Prostate gland (tissue), 2 donors: ENCODE measurements at regions of chr10 and their contacts with region 1.

Region 1: GRCh38 chr10:69506834-69507721 is 55.8 kb downstream of the TSPAN15 start:
- DNase-seq: no peak
- H3K4me3 ChIP-seq: no peak overlapping the region
- H3K27ac ChIP-seq: peak overlapping the region; percentile 30 to 44
- H3K4me1 ChIP-seq: no peaks in the 10 kb centered on the region
- H3K27me3 ChIP-seq: no peaks in the 10 kb centered on the region
- CTCF ChIP-seq: no peak
- POLR2A ChIP-seq: no peak

Region 2: GRCh38 chr10:68959695-68960524 is 547.2 kb before region 1 on chr10:
- intact Hi-C with region 1: no loop called
- DNase-seq: no peak
- H3K4me3 ChIP-seq: no peak overlapping the region
- H3K27ac ChIP-seq: no peak overlapping the region
- H3K4me1 ChIP-seq: no peaks in the 10 kb centered on the region
- H3K27me3 ChIP-seq: no peaks in the 10 kb centered on the region
- CTCF ChIP-seq: no peak
- POLR2A ChIP-seq: no peak

Region 3: DNA sequence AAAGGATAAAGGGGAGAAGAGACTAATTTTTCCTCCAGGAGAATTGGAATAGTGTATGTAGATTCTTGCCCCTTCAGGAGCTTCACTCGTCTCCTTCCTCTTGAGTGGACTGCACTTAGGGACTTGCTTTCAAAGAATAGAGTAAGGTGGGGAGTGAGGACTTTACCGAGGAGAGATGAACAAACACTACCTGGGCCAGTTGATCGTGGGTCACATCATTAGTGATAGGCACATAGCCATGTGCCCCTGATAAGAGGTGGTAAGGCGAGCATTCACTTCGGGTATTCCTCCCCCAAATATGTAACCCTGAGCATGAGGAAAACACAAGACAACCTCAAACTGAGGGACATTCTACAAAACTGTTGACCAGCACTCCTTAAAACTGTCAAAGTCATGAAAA is 533.1 kb before region 1 on chr10:
- intact Hi-C with region 1: no loop called
- DNase-seq: no peak
- H3K4me3 ChIP-seq: no peak overlapping the region
- H3K27ac ChIP-seq: no peak overlapping the region
- H3K4me1 ChIP-seq: no peaks in the 10 kb centered on the region
- H3K27me3 ChIP-seq: no peaks in the 10 kb centered on the region
- CTCF ChIP-seq: no peak
- POLR2A ChIP-seq: no peak

Region 4: GRCh38 chr10:69237528-69238159 is 269.4 kb before region 1 on chr10:
- intact Hi-C with region 1: loop called (anchors 5 kb)
- DNase-seq: peak; percentile 79
- H3K4me3 ChIP-seq: no peak overlapping the region
- H3K27ac ChIP-seq: no peak overlapping the region
- H3K4me1 ChIP-seq: no peaks in the 10 kb centered on the region
- H3K27me3 ChIP-seq: no peaks in the 10 kb centered on the region
- CTCF ChIP-seq: peak; percentile 76 to 97 (median 95)
- POLR2A ChIP-seq: no peak

Region 5: DNA sequence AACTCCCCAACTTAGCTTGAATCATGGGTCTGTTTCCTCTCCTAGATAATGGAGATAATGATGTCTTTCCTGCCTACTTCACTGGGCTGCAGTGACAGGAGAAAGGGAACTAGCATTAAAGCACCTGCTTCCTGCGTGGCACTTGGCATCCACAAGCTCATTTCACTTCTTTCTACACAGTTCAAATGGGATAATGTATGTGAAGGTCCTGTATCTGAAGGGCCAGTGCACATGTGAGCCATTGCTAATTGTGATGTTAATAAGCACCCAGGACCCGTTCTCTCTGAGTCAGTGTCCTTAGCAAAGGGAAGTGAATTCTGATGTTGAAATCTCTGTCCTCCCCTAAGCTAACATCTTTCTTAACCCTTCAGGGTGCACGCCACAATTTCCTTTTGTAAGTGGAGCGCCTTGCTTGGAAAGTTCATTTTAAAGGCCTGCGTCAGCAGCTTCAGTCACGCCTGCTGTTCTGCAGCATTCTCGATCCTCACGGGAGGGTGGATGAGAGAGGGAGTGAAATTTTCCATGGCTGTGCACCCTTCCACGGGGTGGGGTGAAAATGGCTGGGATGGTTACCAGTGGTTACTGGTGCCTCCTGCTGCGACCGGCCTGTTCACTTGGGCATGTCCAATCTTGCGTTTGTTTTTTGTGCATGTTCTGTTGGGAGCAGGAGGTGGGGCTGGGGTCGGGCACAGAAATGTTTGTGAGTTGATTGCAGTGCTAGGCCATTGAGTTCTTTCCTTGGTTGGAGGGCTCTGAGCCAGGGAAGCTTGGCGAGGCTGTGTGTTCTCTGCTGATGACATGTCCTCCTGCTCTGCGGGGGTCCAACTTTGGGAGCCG is 169.6 kb before region 1 on chr10:
- intact Hi-C with region 1: loop called (anchors 10 kb)
- DNase-seq: peak; percentile 84
- H3K4me3 ChIP-seq: no peak overlapping the region
- H3K27ac ChIP-seq: peak overlapping the region; percentile 74 to 77
- H3K4me1 ChIP-seq: peaks cover 51% of the 10 kb centered on the region
- H3K27me3 ChIP-seq: no peaks in the 10 kb centered on the region
- CTCF ChIP-seq: no peak
- POLR2A ChIP-seq: no peak

Region 6: DNA sequence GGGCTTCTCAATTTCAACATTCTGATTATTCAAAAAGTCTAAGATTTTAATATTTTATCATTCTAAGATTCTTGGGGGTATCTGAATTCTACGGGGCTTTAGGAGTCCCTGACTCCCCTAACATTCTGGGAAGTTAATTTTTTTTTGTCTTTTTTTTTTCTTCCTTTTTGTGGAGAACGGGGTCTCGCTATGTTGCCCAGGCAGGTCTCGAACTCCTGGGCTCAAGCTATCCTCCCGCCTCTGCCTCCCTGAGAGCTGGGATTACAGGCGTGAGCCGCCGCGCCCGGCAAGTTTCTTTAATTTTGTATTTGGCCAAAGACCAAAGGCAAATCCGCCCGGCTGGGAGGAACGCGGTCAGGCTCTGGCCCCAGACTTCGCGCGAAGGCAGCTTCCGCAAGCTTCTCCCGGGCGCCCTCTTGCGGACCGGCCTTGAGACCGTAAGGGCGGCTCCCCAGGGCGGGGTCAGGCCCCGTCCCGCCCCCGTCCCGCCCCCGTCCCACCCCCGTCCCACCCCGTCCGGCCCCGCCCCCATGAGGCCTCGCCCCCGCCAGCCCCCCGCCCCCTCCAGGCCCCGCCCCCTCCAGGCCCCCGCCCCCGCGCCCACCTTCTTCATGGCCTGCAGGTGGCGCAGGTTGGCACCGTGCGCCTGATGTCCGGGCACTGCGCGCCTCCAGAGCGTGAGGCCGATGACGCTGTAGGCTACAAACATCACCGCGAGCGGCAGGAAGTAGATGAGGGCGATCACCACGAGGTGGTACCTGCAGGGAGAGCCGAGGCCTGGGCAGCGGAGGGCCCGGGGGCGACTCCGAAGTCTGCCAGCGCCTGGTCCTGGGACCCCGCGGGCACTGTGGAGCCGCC is 98.5 kb before region 1 on chr10:
- intact Hi-C with region 1: loop called (anchors 5 kb)
- DNase-seq: peak; percentile 94
- H3K4me3 ChIP-seq: peak overlapping the region; percentile 27 to 32
- H3K27ac ChIP-seq: peak overlapping the region; percentile 89
- H3K4me1 ChIP-seq: peaks cover 3% of the 10 kb centered on the region
- H3K27me3 ChIP-seq: no peaks in the 10 kb centered on the region
- CTCF ChIP-seq: peak; percentile 60 to 92 (median 66)
- POLR2A ChIP-seq: peak; percentile 42

Region 7: GRCh38 chr10:69425511-69426298 is 81.4 kb before region 1 on chr10:
- intact Hi-C with region 1: loop called (anchors 5 kb)
- DNase-seq: peak; percentile 79
- H3K4me3 ChIP-seq: no peak overlapping the region
- H3K27ac ChIP-seq: peak overlapping the region; percentile 48 to 54
- H3K4me1 ChIP-seq: no peaks in the 10 kb centered on the region
- H3K27me3 ChIP-seq: no peaks in the 10 kb centered on the region
- CTCF ChIP-seq: no peak
- POLR2A ChIP-seq: no peak

Region 8: DNA sequence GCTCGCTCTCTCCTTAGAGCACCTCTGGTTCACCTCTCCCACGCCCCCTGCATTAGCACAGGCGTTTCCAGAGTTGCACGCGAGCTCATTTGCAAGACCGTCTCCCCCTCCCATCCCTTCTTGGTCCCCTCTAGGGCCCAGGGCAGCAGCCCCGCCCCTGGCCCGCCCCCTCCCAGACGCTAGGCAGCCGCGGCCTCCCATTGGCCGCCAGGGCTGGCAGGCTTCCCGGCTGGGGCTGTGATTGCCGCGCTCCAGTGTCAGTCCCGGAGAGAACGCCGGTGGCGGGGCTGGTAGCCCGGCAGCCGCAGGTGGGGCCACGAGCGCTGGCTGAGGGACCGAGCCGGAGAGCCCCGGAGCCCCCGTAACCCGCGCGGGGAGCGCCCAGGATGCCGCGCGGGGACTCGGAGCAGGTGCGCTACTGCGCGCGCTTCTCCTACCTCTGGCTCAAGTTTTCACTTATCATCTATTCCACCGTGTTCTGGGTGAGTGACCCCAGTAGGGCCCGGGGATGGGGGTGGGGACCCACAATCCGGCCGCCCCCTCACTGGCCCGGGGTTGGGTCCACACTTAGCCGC is 55.8 kb before region 1 on chr10 and contains the start of gene TSPAN15:
- intact Hi-C with region 1: loop called (anchors 2 kb)
- DNase-seq: peak; percentile 92
- H3K4me3 ChIP-seq: peak within 1 kb of the TSS; percentile 60 to 73
- H3K27ac ChIP-seq: peak within 1 kb of the TSS; percentile 84 to 88
- H3K4me1 ChIP-seq: peaks cover 6% of the 10 kb centered on the region
- H3K27me3 ChIP-seq: no peaks in the 10 kb centered on the region
- CTCF ChIP-seq: peak in 2 of 4 experiments; percentile 31 to 61
- POLR2A ChIP-seq: peak; percentile 85
- total RNA-seq, gene TSPAN15: 78.8 to 85.3 TPM